ENCODE measurements at regions of chr20 and their contacts with region 1.

Region 1: GRCh38 chr20:35788796-35789195 is 17.0 kb downstream of the PHF20 start:
- H3K4me3 Mint-ChIP-seq: no peak overlapping the region
- H3K27ac Mint-ChIP-seq: no peak overlapping the region
- H3K4me1 Mint-ChIP-seq: peaks cover 12% of the 10 kb centered on the region
- H3K27me3 Mint-ChIP-seq: no peaks in the 10 kb centered on the region

Region 2: DNA sequence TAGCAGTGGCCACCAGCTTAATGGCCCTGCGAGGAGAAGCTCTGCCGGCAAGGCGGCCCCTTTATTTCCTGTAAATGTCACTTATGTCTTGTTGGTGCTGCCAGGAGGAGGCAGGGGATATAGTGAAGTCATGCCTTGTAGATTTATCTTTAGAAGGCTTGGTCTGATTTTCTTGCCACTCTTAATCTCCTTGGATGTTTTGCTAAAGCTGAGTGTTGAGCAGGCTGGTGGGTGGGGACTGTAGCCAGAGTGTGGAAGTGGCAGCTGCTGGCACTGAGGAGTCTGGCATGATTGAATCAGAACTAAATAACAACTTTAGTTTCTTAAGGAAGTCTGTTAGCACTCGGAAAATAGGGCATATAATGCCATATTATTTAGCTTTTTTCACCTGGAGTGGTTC is 60.9 kb after region 1 on chr20:
- intact Hi-C with region 1: loop called (anchors 10 kb)
- H3K4me3 Mint-ChIP-seq: no peak overlapping the region
- H3K27ac Mint-ChIP-seq: no peak overlapping the region
- H3K4me1 Mint-ChIP-seq: peaks cover 31% of the 10 kb centered on the region
- H3K27me3 Mint-ChIP-seq: no peaks in the 10 kb centered on the region